ENCODE measurements at regions of chr12 and their contacts with region 1.

Region 1: DNA sequence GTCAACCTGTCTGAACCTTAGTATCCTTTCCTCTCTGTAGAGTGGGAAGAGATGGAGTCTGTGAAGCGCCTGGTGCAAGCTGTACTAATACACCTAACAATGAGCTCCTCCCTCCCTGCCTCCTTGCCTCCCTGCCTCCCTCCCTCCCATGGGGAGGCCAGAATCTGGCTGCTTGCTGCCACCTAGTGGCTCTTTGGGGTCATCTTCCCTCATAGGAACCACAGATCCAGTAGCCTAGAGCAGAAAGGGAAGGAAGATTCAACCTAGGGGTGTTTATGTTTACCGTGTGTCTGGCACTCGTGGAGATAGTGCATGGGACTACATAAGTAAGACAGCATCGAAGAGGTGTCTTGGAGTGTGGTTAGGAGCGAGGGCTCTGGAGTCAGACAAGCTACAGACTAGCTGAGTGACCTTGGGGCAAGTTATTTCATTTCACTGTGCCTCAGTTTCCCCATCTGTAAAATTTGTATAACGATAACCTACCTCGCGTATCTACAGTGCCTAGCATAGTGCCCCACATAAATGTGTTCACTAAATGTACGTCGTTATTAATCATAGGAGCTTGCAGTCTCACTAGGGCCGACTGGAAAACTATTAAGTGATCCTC is 35.5 kb upstream of the TSPAN9 start:
- DNase-seq: peak; percentile 46
- H3K4me3 Mint-ChIP-seq: no peak overlapping the region
- H3K27ac Mint-ChIP-seq: no peak overlapping the region
- H3K4me1 Mint-ChIP-seq: no peaks in the 10 kb centered on the region
- H3K27me3 Mint-ChIP-seq: peaks cover 7% of the 10 kb centered on the region

Region 2: DNA sequence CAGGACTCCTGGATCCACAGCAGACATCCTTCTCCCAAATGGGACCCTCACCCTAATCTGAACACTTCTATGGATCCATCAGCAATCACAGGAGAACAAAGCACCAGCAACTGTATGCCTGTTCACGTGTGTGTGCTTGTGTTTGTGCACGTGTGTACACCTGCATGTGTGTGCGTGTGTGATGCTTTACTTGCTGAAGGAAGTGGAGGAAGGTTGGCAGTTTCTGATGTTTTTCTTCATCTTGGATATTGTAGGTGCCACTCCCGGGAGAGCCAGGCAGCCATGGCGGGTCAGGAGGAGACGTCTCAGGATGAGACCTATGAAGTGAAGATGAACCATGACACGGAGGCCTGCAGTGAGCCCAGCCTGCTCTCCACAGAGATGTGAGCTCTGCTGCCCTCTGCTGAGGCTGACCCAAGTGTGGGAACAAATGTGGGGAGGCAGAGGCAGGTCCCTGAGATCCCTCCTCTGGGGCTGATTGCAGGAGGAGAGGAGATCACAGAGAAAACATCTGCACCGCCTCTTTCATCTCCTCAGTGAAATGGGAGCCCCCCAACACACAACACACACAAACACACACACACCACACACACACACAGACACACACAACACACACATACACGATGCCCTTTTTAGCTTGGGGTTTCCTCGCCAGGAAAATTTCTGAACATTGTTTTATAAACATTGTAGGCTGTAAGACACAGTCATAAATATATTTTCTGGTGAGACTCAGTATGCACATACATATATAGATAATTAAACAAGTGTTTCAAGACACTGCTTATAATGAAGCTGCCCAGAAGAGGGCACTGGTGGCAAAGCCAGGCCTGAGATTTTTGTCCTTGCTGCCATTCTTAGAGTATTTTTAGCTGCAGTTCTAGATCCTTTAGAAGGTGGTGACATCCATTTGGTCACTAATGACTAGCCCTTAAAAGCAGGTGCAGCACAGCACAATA is 359.1 kb before region 1 on chr12:
- intact Hi-C with region 1: loop called (anchors 10 kb)
- DNase-seq: peak; percentile 31
- H3K4me3 Mint-ChIP-seq: no peak overlapping the region
- H3K27ac Mint-ChIP-seq: peak overlapping the region; percentile 77
- H3K4me1 Mint-ChIP-seq: peaks cover 7% of the 10 kb centered on the region
- H3K27me3 Mint-ChIP-seq: no peaks in the 10 kb centered on the region

Region 3: DNA sequence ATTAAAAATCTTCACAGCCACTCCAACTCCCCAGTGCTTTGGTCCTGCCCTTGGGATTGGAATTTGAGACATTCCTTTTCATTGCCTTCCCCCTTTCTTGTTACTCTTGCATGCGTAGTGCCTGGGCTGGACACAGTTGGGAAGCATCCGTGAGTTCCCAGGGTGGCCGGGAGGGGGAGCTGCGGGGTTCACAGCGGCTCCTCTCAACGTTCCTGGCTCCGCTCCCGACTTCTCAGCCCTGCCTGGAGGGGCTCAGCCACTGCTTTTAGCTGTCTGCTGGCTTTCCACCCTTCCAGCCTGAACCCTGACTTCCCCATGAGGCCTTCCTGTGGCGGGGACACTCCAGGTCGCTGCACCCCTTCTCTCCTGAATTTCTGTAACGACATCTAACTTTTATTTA is 188.0 kb before region 1 on chr12:
- intact Hi-C with region 1: loop called (anchors 1 kb)
- DNase-seq: peak; percentile 19
- H3K4me3 Mint-ChIP-seq: no peak overlapping the region
- H3K27ac Mint-ChIP-seq: no peak overlapping the region
- H3K4me1 Mint-ChIP-seq: no peaks in the 10 kb centered on the region
- H3K27me3 Mint-ChIP-seq: no peaks in the 10 kb centered on the region

Region 4: GRCh38 chr12:2884810-2885209 is 156.9 kb before region 1 on chr12:
- intact Hi-C with region 1: loop called (anchors 1 kb)
- DNase-seq: no peak
- H3K4me3 Mint-ChIP-seq: no peak overlapping the region
- H3K27ac Mint-ChIP-seq: peak overlapping the region; percentile 2
- H3K4me1 Mint-ChIP-seq: peaks cover 35% of the 10 kb centered on the region
- H3K27me3 Mint-ChIP-seq: no peaks in the 10 kb centered on the region

Region 5: DNA sequence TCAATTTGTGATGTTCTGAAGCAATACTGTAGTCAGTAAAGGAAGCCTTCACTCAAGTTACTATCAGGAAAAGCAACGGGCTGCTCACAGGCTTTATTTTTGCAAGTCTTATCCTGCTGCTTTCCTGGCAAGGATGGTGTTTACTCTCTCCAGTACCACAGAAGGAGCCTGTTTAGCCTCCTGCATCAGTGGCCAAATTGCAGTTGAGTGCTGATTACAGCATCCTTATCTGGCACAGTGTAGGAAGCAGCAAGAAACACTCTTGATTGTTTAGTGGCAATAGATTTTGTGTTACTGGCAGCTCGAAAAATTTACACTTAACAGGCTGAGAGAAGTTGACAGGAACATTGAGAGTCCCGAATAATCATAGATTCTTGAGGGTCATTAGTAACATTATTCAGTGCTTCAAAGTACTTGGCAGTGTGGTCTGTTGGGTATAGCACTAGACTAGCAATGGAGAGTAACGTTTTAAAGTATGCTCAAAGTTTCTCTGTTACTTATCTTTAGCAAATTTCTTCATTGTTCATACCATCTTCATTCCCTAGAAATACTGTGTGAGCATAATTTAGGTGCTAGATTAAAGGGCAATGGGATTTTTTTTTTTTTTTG is 139.3 kb before region 1 on chr12:
- intact Hi-C with region 1: no loop called
- DNase-seq: no peak
- H3K4me3 Mint-ChIP-seq: no peak overlapping the region
- H3K27ac Mint-ChIP-seq: no peak overlapping the region
- H3K4me1 Mint-ChIP-seq: no peaks in the 10 kb centered on the region
- H3K27me3 Mint-ChIP-seq: no peaks in the 10 kb centered on the region

Region 6: DNA sequence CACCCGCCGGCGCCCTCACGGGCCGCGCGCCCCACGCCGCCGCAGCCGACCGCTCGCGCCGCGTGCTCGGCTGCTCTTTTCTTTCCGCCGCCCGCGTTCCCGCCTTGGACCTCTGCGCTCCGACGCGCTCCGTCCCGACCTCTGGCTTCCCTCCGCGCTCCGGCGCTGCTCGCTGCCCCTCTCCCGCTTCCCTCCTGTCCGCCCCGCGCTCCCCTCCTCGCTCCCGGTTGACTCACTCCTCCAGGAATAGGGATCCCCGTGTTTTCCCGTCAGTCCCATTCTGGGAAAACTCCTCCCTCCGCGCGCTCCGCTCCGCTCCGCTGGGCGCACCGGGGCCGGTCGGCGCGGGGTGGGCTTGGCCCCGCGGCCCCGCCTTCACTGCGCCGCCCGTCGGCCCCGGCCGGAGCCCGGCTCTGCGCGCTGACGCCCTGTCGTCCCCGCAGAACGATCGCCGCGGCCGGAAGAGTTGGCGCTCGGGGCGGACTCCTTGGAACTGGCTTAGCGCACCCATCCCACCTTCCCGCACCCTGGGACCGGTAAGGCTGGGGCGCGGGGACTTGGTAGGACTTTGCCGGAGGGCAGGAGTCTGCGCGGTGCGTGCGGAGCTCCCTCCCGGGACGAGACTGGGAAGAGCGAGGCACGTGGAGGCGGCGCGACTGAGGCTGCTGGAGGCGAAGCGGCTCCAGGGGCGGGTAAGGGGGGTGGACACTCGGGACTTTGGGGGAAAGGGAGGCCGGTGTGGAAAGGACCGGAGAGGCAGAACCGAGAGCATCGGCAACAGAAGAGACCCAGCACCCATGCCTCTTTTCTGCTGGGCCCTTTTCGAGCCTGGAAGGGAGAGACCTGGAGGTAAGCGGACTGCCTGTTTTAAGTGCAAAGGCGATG is 81.9 kb before region 1 on chr12:
- intact Hi-C with region 1: loop called (anchors 10 kb)
- DNase-seq: no peak
- H3K4me3 Mint-ChIP-seq: peak overlapping the region; percentile 74
- H3K27ac Mint-ChIP-seq: peak overlapping the region; percentile 15
- H3K4me1 Mint-ChIP-seq: peaks cover 18% of the 10 kb centered on the region
- H3K27me3 Mint-ChIP-seq: peaks cover 63% of the 10 kb centered on the region